ENCODE measurements at regions of chr3 and their contacts with region 1.

Region 1: DNA sequence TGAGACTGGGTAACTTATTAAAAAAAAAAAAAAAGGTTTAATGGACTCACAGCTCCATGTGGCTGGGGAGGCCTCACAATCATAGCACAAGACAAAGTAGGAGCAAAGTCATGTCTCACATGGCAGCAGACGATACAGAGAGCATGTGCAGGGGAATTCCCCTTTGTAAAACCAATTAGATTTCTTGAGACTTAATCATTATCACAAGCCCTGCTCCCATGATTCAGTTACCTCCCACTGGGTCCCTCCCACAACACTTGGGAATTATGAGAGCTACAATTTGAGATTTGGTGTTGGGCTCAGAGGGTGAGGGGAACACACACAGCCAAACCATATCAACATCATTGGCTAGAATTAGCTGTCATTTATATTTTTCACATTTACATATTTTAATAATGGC is 221.0 kb downstream of the RSRC1 start:
- DNase-seq: no peak
- H3K4me3 ChIP-seq: no peak overlapping the region
- H3K27ac ChIP-seq: no peak overlapping the region
- H3K4me1 ChIP-seq: peaks cover 0 to 2% (median 0%) of the 10 kb centered on the region in 4 experiments; a peak in 3 of 7 replicates
- H3K27me3 ChIP-seq: no peaks in the 10 kb centered on the region
- CTCF ChIP-seq: no peak
- EP300 ChIP-seq: no peak
- POLR2A ChIP-seq: no peak
- RAD21 ChIP-seq: no peak

Region 2: DNA sequence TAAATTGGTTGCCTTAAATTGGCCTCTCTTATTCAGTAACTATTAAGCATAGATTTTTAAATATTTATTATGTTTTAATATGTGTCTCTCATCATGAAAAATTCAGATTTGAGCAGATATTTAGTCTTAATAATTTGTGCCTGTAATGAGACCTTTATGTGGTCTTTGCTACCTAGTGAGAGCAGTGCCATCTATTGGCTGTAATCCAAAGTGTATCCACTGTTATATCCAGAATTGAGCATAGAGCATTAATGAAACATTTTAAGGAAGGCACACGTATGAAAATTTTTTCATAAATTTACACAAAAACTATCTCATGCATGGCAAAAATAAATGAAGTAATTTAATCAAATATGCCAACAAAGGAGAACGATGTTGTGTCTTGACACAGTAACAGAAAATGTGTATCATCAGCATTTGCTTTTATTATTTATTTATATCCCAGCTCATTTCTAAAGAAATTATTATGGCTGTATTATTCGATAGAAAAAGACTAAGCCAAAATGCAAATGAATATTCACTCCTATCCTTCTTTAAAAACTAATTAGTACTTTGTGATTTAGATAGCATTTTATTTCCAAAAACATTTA is 17.4 kb before region 1 on chr3:
- CTCF ChIA-PET with region 1: interaction called, 10 read pairs
- POLR2A ChIA-PET with region 1: no interaction called
- DNase-seq: no peak
- H3K4me3 ChIP-seq: no peak overlapping the region
- H3K27ac ChIP-seq: no peak overlapping the region
- H3K4me1 ChIP-seq: no peaks in the 10 kb centered on the region
- H3K27me3 ChIP-seq: no peaks in the 10 kb centered on the region
- CTCF ChIP-seq: peak in 2 of 3 experiments; percentile 32 to 48; a peak in 2 of 4 replicates
- EP300 ChIP-seq: no peak
- POLR2A ChIP-seq: no peak
- RAD21 ChIP-seq: peak; percentile 75

Region 3: GRCh38 chr3:158420654-158421396 is 90.0 kb after region 1 on chr3:
- CTCF ChIA-PET with region 1: no interaction called
- POLR2A ChIA-PET with region 1: no interaction called
- DNase-seq: no peak
- H3K4me3 ChIP-seq: no peak overlapping the region
- H3K27ac ChIP-seq: no peak overlapping the region
- H3K4me1 ChIP-seq: no peaks in the 10 kb centered on the region
- H3K27me3 ChIP-seq: no peaks in the 10 kb centered on the region
- CTCF ChIP-seq: no peak
- EP300 ChIP-seq: no peak
- POLR2A ChIP-seq: no peak
- RAD21 ChIP-seq: no peak

Region 4: DNA sequence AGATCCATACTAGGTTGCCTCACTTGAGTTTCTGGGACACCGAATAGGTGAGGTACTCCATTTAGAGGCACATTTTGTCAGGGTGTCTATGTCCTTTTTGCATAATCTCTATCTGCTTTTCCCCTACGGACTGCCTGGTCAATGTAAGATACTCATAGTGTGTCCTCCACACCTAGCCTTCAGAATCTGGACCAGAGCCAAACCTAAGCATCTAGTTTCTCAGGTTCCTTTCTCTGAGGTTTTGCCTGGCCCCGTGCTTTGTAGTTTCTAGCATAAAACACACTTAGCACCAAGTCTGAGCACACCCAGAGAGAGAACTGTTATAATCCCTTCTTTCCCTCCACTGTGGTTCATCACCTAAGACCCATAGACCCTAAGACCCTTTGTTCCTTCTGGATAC is 134.2 kb after region 1 on chr3:
- CTCF ChIA-PET with region 1: no interaction called
- POLR2A ChIA-PET with region 1: no interaction called
- DNase-seq: no peak
- H3K4me3 ChIP-seq: no peak overlapping the region
- H3K27ac ChIP-seq: no peak overlapping the region
- H3K4me1 ChIP-seq: no peaks in the 10 kb centered on the region
- H3K27me3 ChIP-seq: no peaks in the 10 kb centered on the region
- CTCF ChIP-seq: no peak
- EP300 ChIP-seq: no peak
- POLR2A ChIP-seq: no peak
- RAD21 ChIP-seq: no peak

Region 5: DNA sequence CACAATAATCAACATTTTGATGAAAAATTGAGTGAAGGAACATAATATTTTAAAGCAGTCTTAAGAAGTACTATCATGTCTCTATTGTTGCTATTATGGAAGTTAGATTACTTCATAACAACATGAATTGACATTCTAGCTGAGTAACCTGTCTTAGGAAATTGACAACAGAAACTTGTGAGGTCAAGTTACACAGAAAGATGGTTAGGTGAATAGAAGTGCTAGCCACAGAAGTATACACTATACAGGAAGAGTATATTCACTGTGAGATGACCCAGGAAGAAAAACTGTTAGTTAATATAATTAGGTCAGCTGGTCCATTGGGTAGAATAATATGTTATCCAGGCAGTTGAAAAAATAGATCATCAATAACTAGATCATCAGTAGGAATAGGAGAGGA is 271.4 kb after region 1 on chr3:
- CTCF ChIA-PET with region 1: no interaction called
- POLR2A ChIA-PET with region 1: no interaction called
- DNase-seq: no peak
- H3K4me3 ChIP-seq: no peak overlapping the region
- H3K27ac ChIP-seq: no peak overlapping the region
- H3K4me1 ChIP-seq: no peaks in the 10 kb centered on the region
- H3K27me3 ChIP-seq: no peaks in the 10 kb centered on the region
- CTCF ChIP-seq: no peak
- EP300 ChIP-seq: no peak
- POLR2A ChIP-seq: no peak
- RAD21 ChIP-seq: no peak